CD14-positive monocyte (primary cell): ENCODE measurements at regions of chr10 and their contacts with region 1.

Region 1: DNA sequence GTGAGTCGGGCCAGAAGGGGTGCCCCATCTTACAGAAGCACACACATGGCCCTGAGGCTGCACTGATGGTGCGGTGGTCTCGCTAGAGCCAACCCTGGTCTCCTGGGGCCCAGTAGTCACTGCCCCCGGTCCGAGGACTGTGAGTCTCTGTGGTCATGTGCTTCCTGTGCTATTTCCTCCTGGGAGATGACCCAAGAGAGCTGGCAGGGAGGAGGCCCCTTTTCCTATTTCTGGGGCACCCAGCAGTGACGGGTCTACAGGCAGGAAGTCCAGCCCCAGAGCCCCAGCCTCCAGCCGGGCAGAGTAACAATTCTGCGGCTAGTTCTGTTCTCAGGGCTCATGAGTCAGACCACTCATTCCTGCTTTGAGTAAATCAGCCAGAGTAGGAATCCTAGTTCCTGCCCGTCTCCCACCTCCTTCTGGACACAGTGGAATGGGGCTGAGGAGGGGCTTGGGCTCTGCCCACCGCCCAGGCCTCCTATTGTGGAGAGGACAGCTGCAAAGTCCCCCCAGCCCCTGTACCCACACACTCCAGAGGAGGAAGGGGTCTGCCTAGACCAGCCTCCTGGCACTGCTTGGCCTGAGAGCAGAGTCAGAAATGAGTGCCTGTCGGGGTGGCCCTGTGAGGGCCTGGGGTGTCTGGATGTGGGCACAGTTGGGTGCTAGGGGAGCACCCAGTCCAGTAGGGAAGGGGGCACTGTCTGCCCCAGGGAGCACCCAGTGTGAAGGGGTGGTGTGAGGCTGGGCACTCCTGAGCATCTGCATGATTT is 80.5 kb upstream of the PPIF start:
- DNase-seq: peak; percentile 96 to 98 (median 98)
- H3K4me3 ChIP-seq: peak overlapping the region in 1 of 3 experiments; percentile 42
- H3K4me3 Mint-ChIP-seq: peak overlapping the region; percentile 43 to 74
- H3K27ac ChIP-seq: peak overlapping the region; percentile 98 to 100
- H3K27ac Mint-ChIP-seq: peak overlapping the region; percentile 99 to 100 (median 99)
- H3K4me1 ChIP-seq: peaks cover 79 to 86% of the 10 kb centered on the region in 2 donors
- H3K4me1 Mint-ChIP-seq: peaks cover 95% of the 10 kb centered on the region
- H3K27me3 ChIP-seq: no peaks in the 10 kb centered on the region
- H3K27me3 Mint-ChIP-seq: peaks cover 0 to 3% (median 0%) of the 10 kb centered on the region in 3 donors
- CTCF ChIP-seq: no peak

Region 2: GRCh38 chr10:79223091-79224048 is 43.4 kb before region 1 on chr10:
- intact Hi-C with region 1: no loop called
- DNase-seq: peak in 2 of 3 donors; percentile 39 to 66
- H3K4me3 ChIP-seq: no peak overlapping the region
- H3K4me3 Mint-ChIP-seq: no peak overlapping the region
- H3K27ac ChIP-seq: peak overlapping the region in 1 of 2 donors; percentile 32
- H3K27ac Mint-ChIP-seq: peak overlapping the region in 4 of 7 donors; percentile 7 to 88 (median 56)
- H3K4me1 ChIP-seq: peaks cover 0 to 6% of the 10 kb centered on the region in 2 donors
- H3K4me1 Mint-ChIP-seq: peaks cover 16% of the 10 kb centered on the region
- H3K27me3 ChIP-seq: no peaks in the 10 kb centered on the region
- H3K27me3 Mint-ChIP-seq: peaks cover 0 to 2% (median 0%) of the 10 kb centered on the region in 3 donors
- CTCF ChIP-seq: no peak

Region 3: GRCh38 chr10:79249186-79250121 is 17.3 kb before region 1 on chr10:
- intact Hi-C with region 1: loop called in 1 of 2 experiments (anchors 2 kb)
- DNase-seq: peak in 2 of 3 donors; percentile 75 to 84
- H3K4me3 ChIP-seq: peak overlapping the region in 1 of 3 experiments; percentile 41
- H3K4me3 Mint-ChIP-seq: peak overlapping the region; percentile 62 to 71
- H3K27ac ChIP-seq: peak overlapping the region; percentile 90 to 95
- H3K27ac Mint-ChIP-seq: peak overlapping the region; percentile 93 to 99 (median 96)
- H3K4me1 ChIP-seq: peaks cover 80 to 84% of the 10 kb centered on the region in 2 donors
- H3K4me1 Mint-ChIP-seq: peaks cover 86% of the 10 kb centered on the region
- H3K27me3 ChIP-seq: no peaks in the 10 kb centered on the region
- H3K27me3 Mint-ChIP-seq: peaks cover 0 to 2% (median 0%) of the 10 kb centered on the region in 3 donors
- CTCF ChIP-seq: no peak